ENCODE measurements at regions of chr2 and their contacts with region 1.

Region 1: DNA sequence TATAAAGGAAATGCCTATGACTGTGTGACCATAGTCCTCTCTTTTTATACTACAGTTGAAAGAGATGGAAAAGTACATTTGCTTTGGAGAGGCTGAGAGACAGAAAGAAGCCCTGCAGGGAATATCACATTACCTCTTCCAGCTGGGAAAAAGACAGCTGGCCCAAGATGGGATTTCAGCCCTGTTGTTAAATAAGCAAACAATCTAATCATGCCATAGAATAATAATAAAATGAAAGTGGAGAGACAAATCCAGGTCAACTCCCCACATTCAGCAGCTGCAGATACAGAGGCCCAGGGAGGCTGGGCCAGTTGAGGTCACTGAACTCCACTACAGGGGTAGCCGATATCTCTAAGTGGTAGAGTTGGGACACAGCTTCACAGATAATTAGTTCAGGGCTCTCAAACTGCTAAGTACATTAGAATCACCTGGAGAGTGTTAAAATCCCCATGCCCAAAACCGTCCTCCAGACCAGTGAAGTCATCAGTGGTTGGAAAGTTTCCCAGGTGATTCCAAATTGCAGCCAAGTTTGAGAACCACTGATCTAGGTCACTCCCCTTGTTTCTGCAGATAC is 81.9 kb downstream of the MOGAT1 start:
- DNase-seq: no peak
- ATAC-seq: peak; percentile 57 to 80 (median 68)
- H3K4me3 ChIP-seq: no peak overlapping the region
- H3K27ac ChIP-seq: peak overlapping the region; percentile 68
- H3K4me1 ChIP-seq: peaks cover 18% of the 10 kb centered on the region
- H3K27me3 ChIP-seq: no peaks in the 10 kb centered on the region
- CTCF ChIP-seq: no peak

Region 2: GRCh38 chr2:222391743-222392285 is 361.5 kb before region 1 on chr2:
- intact Hi-C with region 1: no loop called
- DNase-seq: no peak
- ATAC-seq: no peak
- H3K4me3 ChIP-seq: no peak overlapping the region
- H3K27ac ChIP-seq: no peak overlapping the region
- H3K4me1 ChIP-seq: no peaks in the 10 kb centered on the region
- H3K27me3 ChIP-seq: no peaks in the 10 kb centered on the region
- CTCF ChIP-seq: no peak

Region 3: GRCh38 chr2:222714361-222715241 is 38.7 kb before region 1 on chr2:
- intact Hi-C with region 1: loop called in 1 of 2 experiments (anchors 5 kb)
- DNase-seq: no peak
- ATAC-seq: peak; percentile 63 to 89 (median 83)
- H3K4me3 ChIP-seq: no peak overlapping the region
- H3K27ac ChIP-seq: peak overlapping the region; percentile 85
- H3K4me1 ChIP-seq: peaks cover 21% of the 10 kb centered on the region
- H3K27me3 ChIP-seq: no peaks in the 10 kb centered on the region
- CTCF ChIP-seq: no peak

Measured in psoas muscle (tissue), 8 donors.